ENCODE measurements at regions of chr6 and their contacts with region 1.

Region 1: DNA sequence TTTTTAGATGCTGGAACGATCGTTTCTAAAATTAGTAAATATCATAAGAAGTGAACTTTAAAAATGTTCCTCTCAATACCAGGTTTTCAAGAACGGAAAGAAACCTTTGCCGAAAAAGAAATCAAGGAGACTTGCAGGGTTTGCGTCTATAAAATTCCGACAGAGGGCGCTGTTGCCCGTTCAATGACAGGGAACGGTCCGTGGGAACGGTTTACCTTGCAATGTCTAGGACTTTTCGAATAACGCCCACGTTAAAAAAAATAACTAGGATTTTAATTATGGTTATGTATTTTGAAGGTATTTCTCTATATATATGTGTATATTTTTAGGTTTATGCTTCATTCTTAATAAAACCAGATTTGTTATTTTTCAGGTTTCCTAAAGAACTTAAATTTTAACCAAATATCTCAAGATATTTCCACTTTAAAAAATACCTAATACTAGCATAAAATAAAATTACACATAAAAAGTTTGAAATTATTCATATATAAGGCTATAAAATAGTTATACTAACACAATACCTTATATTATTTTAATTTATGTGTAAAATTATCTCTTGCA is 2.5 kb upstream of the TFAP2B start:
- DNase-seq: peak; percentile 67
- ATAC-seq: no peak

Region 2: DNA sequence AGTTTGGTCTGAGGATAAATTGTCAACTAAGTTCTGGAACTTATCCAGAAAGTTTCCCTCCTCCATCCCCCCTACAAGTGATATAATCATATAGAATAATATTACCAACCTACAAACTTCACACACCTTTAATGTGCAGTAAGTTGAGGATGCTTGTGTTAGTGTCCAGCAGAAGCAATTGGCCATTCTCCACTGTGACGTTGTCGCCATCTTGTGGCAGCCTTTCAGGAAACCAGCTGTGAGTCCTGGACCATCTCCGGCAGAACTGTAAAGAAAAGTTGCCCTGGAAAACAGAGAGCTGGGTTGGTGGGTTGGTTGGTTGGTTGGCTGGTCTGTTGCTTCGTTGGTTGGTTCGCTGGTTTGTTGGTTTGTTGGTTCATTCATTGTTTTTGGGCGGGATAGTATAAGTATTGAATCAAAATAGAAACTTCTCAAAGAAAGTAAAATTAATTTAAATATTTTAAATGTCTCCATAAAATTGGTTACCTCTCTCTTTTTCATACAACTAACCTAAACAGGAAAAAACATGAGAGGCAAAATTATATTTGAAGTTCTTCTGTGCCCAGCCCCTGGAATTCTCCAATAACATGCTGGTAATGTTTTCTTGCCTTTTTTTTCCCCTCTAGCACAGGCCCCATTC is 1143.7 kb after region 1 on chr6:
- intact Hi-C with region 1: loop called (anchors 2 kb)
- DNase-seq: no peak
- ATAC-seq: no peak

Region 3: GRCh38 chr6:52020945-52021570 is 1204.9 kb after region 1 on chr6:
- intact Hi-C with region 1: loop called (anchors 5 kb)
- DNase-seq: no peak
- ATAC-seq: no peak

Measured in Right ventricle myocardium inferior (tissue), 1 donor.